Ascending aorta (tissue), 2 donors: ENCODE measurements at regions of chr3 and their contacts with region 1.

Region 1: DNA sequence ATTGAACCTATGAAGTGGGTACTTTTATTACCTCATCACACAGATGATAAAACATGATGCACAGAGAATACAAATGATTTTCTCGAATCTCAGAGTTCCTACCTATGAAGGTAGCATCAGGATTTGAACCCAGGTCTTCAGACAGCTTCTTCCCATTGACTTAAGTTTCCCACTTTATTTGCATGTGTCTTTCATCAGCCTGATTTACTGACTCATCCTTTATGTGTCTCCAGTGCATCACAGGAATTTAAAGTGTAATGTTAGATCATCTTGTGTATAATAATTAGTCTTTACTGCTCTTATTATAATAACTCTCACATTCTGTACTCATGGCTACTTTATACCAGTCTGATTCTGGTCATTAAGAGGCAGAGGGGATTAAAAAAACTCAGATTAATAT is 449.4 kb upstream of the SUCLG2 start:
- DNase-seq: no peak
- H3K4me3 ChIP-seq: no peak overlapping the region
- H3K27ac ChIP-seq: no peak overlapping the region
- H3K4me1 ChIP-seq: no peaks in the 10 kb centered on the region
- H3K27me3 ChIP-seq: no peaks in the 10 kb centered on the region
- CTCF ChIP-seq: no peak

Region 2: GRCh38 chr3:66856533-66856932 is 1247.3 kb before region 1 on chr3:
- intact Hi-C with region 1: no loop called
- DNase-seq: no peak
- H3K4me3 ChIP-seq: no peak overlapping the region
- H3K27ac ChIP-seq: no peak overlapping the region
- H3K4me1 ChIP-seq: no peaks in the 10 kb centered on the region
- H3K27me3 ChIP-seq: no peaks in the 10 kb centered on the region
- CTCF ChIP-seq: no peak

Region 3: DNA sequence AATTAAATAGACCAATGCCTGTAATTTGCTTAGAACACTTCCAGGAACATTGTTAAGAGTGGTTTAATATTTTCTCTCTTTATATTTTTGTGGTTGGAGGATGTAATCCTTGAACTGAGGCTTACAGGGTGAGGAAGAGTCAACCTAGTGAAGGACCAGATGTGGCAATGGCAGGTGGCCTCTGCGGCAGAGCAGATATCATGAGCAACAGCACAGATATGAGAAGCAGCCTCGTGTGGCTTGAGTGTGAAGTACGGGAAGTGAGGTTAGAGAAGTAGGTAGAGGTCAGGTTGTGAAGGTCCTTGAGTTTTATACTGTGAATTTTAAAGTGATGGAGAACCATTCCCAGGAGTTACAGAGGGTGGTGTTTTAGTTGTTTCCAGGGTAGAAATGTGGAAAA is 31.7 kb before region 1 on chr3:
- intact Hi-C with region 1: loop called (anchors 5 kb)
- DNase-seq: no peak
- H3K4me3 ChIP-seq: no peak overlapping the region
- H3K27ac ChIP-seq: no peak overlapping the region
- H3K4me1 ChIP-seq: no peaks in the 10 kb centered on the region
- H3K27me3 ChIP-seq: no peaks in the 10 kb centered on the region
- CTCF ChIP-seq: no peak